Calu3 (cell line): ENCODE measurements at regions of chr4 and their contacts with region 1.

Region 1: DNA sequence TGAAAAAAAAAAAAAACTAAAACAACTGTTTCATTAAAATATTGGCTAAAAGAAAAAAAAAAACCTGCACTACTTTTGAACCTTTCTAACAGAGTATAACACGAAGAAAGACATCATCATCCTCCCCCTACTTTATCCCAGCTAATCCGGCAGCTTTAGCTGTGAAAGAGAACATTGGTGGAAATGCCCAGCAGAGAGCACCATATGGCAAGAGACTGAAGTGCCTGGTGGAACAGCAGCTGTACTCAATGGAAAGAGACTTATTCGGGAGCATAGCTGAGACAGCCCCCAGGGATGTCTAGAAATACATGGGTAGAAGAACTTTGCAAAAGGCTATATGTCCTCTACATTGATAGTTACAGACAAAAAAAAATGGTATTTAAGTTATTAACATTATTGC is 30.3 kb downstream of the STPG2 start:
- DNase-seq: no peak
- H3K4me3 Mint-ChIP-seq: no peak overlapping the region
- H3K27ac Mint-ChIP-seq: no peak overlapping the region
- H3K4me1 Mint-ChIP-seq: no peaks in the 10 kb centered on the region
- H3K27me3 Mint-ChIP-seq: no peaks in the 10 kb centered on the region
- CTCF ChIP-seq: no peak

Region 2: DNA sequence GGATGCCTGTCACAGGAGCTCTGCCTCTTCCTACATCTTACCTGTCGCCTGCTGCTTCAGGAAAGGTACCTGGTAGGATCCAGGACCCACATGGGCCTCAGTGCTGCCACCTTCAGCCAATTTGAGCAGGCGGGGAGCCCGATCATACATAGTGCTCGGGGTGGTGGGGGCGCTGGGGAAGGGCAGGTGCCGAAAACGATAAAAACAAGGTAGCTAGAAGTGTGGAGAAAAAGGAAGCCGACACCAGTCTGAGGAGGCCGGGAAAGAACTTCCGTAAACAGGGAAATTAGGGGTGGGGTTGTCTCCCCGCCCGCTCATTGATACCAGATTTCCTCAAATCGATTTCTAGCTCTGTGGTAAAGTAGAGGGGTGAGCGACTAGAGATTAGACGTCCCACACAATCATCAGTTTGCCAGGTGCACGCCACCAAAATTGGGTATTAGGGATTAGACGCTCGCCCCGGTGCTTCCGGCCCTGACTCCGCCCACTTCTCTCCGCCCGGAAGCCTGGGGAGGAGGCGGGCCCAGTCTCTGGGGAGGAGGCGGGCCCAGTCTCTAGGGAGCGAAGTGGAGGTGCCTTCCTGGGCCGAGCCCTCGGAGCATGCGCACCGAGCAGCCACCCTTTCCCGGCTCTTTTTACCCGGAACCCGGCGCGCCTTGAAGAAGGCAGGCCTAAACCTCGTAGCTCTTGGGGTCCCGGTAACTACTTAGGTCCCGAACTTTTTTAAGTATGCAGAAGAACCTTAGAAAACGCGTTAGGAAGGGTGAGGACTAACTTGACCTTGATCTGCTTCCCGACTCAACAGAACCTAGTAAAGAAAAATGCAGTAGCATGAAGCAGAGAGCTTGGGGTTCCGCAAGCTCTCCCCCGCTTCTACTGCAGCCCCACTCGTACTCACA is 30.2 kb after region 1 on chr4 and contains the start of gene STPG2:
- CTCF ChIA-PET with region 1: no interaction called
- intact Hi-C with region 1: loop called (anchors 2 kb)
- DNase-seq: peak; percentile 92
- H3K4me3 Mint-ChIP-seq: peak within 1 kb of the TSS; percentile 81
- H3K27ac Mint-ChIP-seq: peak within 1 kb of the TSS; percentile 88
- H3K4me1 Mint-ChIP-seq: peaks cover 11% of the 10 kb centered on the region
- H3K27me3 Mint-ChIP-seq: no peaks in the 10 kb centered on the region
- CTCF ChIP-seq: peak; percentile 37
- total RNA-seq, gene STPG2: not detected in 2 replicates